IMR-90 (cell line): ENCODE measurements at regions of chr5 and their contacts with region 1.

Region 1: GRCh38 chr5:41843456-41844370 is 26.5 kb downstream of the OXCT1 start:
- DNase-seq: peak; percentile 75
- ATAC-seq: peak; percentile 92
- H3K4me3 ChIP-seq: no peak overlapping the region
- H3K27ac ChIP-seq: no peak overlapping the region
- H3K4me1 ChIP-seq: no peaks in the 10 kb centered on the region
- H3K27me3 ChIP-seq: no peaks in the 10 kb centered on the region
- CTCF ChIP-seq: peak; percentile 95
- POLR2A ChIP-seq: 0 out of 2 replicates have a peak, but pooled peaks have one; percentile 35
- RAD21 ChIP-seq: peak; percentile 96

Region 2: DNA sequence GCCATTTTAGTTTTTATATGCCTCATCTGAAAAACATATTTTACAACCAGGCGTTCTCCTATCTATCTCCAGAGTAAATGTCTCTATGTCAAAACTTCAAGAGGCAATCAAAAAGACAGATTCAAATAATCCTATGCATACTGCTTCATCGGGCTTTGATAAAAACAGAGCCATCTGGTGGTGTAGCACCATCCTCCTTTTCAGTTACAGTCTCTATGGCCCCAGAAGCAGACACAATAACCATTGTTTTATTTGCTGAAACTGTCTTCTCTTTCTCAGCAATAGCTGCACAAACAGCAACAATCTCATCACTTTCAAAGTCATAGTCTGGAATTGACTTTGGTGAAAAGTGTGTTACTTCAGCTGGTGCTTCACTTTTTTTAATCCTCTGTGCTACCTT is 1127.7 kb before region 1 on chr5:
- CTCF ChIA-PET with region 1: no interaction called
- POLR2A ChIA-PET with region 1: no interaction called
- dilution Hi-C with region 1: no loop called
- in situ Hi-C with region 1: no loop called
- intact Hi-C with region 1: loop called (anchors 5 kb)
- DNase-seq: no peak
- ATAC-seq: no peak
- H3K4me3 ChIP-seq: no peak overlapping the region
- H3K27ac ChIP-seq: no peak overlapping the region
- H3K4me1 ChIP-seq: 0 out of 2 replicates have a peak, but pooled peaks cover 2% of the 10 kb centered on the region
- H3K27me3 ChIP-seq: no peaks in the 10 kb centered on the region
- CTCF ChIP-seq: 0 out of 2 replicates have a peak, but pooled peaks have one; percentile 15
- POLR2A ChIP-seq: no peak
- RAD21 ChIP-seq: no peak

Region 3: DNA sequence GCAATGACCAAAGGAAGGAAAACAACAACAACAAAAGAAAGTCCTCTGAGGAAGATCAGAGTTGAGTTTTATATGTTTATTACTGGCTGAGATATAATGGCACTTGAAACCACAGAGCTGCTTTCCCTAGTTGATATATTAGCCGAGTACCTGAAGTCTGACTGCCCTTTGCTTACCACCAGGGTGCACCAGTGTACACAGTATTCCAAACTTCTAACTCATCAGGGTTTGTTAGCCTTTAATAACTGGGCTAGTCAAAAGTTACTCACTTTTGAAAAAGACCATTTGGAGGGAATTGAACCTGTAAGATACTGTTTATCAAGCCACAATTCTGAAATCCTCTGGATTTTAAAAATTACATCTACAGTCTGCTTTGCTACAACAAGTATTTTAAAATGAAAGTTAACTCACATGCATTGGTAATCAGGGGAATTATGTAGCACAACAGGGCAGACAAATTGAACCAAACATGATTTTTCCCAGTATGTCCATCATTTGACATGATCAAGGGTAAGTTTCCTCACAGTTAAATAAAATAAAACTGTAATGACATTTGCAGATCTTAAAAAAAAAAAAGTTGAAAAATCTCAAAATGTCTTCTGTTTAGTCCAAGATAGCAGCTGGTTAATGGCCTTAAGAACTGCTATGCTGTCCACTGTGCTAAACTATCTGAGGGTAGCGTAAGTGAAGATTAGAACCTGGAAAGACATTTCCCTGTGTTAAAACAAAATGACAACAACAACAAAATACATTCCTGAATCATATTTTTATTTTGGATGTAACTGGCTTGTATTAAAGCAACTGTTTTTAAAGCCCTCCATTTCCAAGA is 573.1 kb before region 1 on chr5:
- CTCF ChIA-PET with region 1: no interaction called
- POLR2A ChIA-PET with region 1: no interaction called
- dilution Hi-C with region 1: no loop called
- in situ Hi-C with region 1: loop called (anchors 25 kb)
- intact Hi-C with region 1: loop called (anchors 5 kb)
- DNase-seq: peak; percentile 76
- ATAC-seq: peak; percentile 89
- H3K4me3 ChIP-seq: no peak overlapping the region
- H3K27ac ChIP-seq: no peak overlapping the region
- H3K4me1 ChIP-seq: peaks cover 6% of the 10 kb centered on the region
- H3K27me3 ChIP-seq: no peaks in the 10 kb centered on the region
- CTCF ChIP-seq: peak; percentile 80
- POLR2A ChIP-seq: no peak
- RAD21 ChIP-seq: peak; percentile 77

Region 4: GRCh38 chr5:41695920-41696582 is 147.7 kb before region 1 on chr5:
- CTCF ChIA-PET with region 1: no interaction called
- POLR2A ChIA-PET with region 1: no interaction called
- dilution Hi-C with region 1: no loop called
- in situ Hi-C with region 1: no loop called
- intact Hi-C with region 1: loop called (anchors 1 kb)
- DNase-seq: no peak
- ATAC-seq: peak; percentile 53
- H3K4me3 ChIP-seq: no peak overlapping the region
- H3K27ac ChIP-seq: no peak overlapping the region
- H3K4me1 ChIP-seq: no peaks in the 10 kb centered on the region
- H3K27me3 ChIP-seq: peaks cover 2% of the 10 kb centered on the region
- CTCF ChIP-seq: peak; percentile 35
- POLR2A ChIP-seq: no peak
- RAD21 ChIP-seq: peak; percentile 44

Region 5: GRCh38 chr5:41707853-41708603 is 135.7 kb before region 1 on chr5:
- CTCF ChIA-PET with region 1: interaction called, 9 read pairs
- POLR2A ChIA-PET with region 1: no interaction called
- dilution Hi-C with region 1: no loop called
- in situ Hi-C with region 1: loop called (anchors 5 kb)
- intact Hi-C with region 1: loop called (anchors 1 kb)
- DNase-seq: peak; percentile 76
- ATAC-seq: peak; percentile 99
- H3K4me3 ChIP-seq: no peak overlapping the region
- H3K27ac ChIP-seq: peak overlapping the region; percentile 72; the same call in 1 of the 2 replicates
- H3K4me1 ChIP-seq: peaks cover 5% of the 10 kb centered on the region
- H3K27me3 ChIP-seq: no peaks in the 10 kb centered on the region
- CTCF ChIP-seq: peak; percentile 89
- POLR2A ChIP-seq: no peak
- RAD21 ChIP-seq: peak; percentile 87

Region 6: GRCh38 chr5:41722359-41722950 is 121.3 kb before region 1 on chr5:
- CTCF ChIA-PET with region 1: interaction called, 4 read pairs
- POLR2A ChIA-PET with region 1: no interaction called
- dilution Hi-C with region 1: no loop called
- in situ Hi-C with region 1: no loop called
- intact Hi-C with region 1: loop called (anchors 5 kb)
- DNase-seq: peak; percentile 10
- ATAC-seq: peak; percentile 37; the same call in 1 of the 2 replicates
- H3K4me3 ChIP-seq: no peak overlapping the region
- H3K27ac ChIP-seq: no peak overlapping the region
- H3K4me1 ChIP-seq: no peaks in the 10 kb centered on the region
- H3K27me3 ChIP-seq: no peaks in the 10 kb centered on the region
- CTCF ChIP-seq: peak; percentile 29; the same call in 1 of the 2 replicates
- POLR2A ChIP-seq: no peak
- RAD21 ChIP-seq: peak; percentile 24; the same call in 1 of the 2 replicates

Region 7: GRCh38 chr5:41924872-41925554 is 81.3 kb after region 1 on chr5 and contains the start of gene FBXO4:
- CTCF ChIA-PET with region 1: no interaction called
- POLR2A ChIA-PET with region 1: no interaction called
- dilution Hi-C with region 1: no loop called
- in situ Hi-C with region 1: no loop called
- intact Hi-C with region 1: no loop called
- DNase-seq: peak; percentile 78
- ATAC-seq: peak; percentile 99
- H3K4me3 ChIP-seq: peak within 1 kb of the TSS; percentile 67
- H3K27ac ChIP-seq: peak within 1 kb of the TSS; percentile 61
- H3K4me1 ChIP-seq: no peaks in the 10 kb centered on the region; the same call in 1 of the 2 replicates
- H3K27me3 ChIP-seq: no peaks in the 10 kb centered on the region
- CTCF ChIP-seq: peak; percentile 70
- POLR2A ChIP-seq: peak; percentile 84
- RAD21 ChIP-seq: peak; percentile 30; the same call in 1 of the 2 replicates
- total RNA-seq, gene FBXO4: 4.1 and 8.3 TPM in 2 replicates